ENCODE measurements at regions of chr6 and their contacts with region 1.

Region 1: GRCh38 chr6:135506270-135506997 is 8.9 kb upstream of the AHI1 start:
- DNase-seq: no peak
- ATAC-seq: peak; percentile 62
- H3K4me3 Mint-ChIP-seq: no peak overlapping the region
- H3K27ac Mint-ChIP-seq: no peak overlapping the region
- H3K4me1 Mint-ChIP-seq: peaks cover 2% of the 10 kb centered on the region
- H3K27me3 Mint-ChIP-seq: no peaks in the 10 kb centered on the region
- CTCF ChIP-seq: peak; percentile 35

Region 2: DNA sequence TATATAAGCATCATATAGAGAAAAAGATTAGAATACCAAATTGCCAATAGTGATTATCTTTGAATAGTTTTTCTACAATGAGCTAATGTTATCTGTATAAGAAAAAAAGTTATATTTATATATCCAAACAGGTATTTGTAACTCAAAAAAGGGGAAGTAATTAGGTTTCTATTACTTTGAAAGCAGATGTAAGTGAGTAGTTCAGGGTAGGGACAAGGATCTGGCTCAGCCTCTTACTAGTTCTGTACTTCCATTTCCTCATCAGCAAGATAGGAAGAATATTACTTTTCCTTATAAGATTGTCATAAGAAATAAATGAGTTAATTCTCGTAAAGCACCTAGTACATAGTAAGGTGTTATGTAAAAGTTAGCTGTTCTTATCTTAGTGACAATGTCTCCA is 41.1 kb before region 1 on chr6:
- CTCF ChIA-PET with region 1: no interaction called
- POLR2A ChIA-PET with region 1: no interaction called
- intact Hi-C with region 1: no loop called
- DNase-seq: no peak
- ATAC-seq: peak; percentile 66
- H3K4me3 Mint-ChIP-seq: no peak overlapping the region
- H3K27ac Mint-ChIP-seq: no peak overlapping the region
- H3K4me1 Mint-ChIP-seq: peaks cover 13% of the 10 kb centered on the region
- H3K27me3 Mint-ChIP-seq: no peaks in the 10 kb centered on the region
- CTCF ChIP-seq: no peak

Region 3: GRCh38 chr6:135566311-135567068 is 60.1 kb after region 1 on chr6:
- CTCF ChIA-PET with region 1: no interaction called
- POLR2A ChIA-PET with region 1: no interaction called
- intact Hi-C with region 1: no loop called
- DNase-seq: no peak
- ATAC-seq: no peak
- H3K4me3 Mint-ChIP-seq: no peak overlapping the region
- H3K27ac Mint-ChIP-seq: no peak overlapping the region
- H3K4me1 Mint-ChIP-seq: no peaks in the 10 kb centered on the region
- H3K27me3 Mint-ChIP-seq: no peaks in the 10 kb centered on the region
- CTCF ChIP-seq: no peak

Region 4: GRCh38 chr6:135675862-135676261 is 169.4 kb after region 1 on chr6:
- CTCF ChIA-PET with region 1: no interaction called
- POLR2A ChIA-PET with region 1: no interaction called
- intact Hi-C with region 1: loop called (anchors 1 kb)
- DNase-seq: no peak
- ATAC-seq: peak; percentile 70
- H3K4me3 Mint-ChIP-seq: no peak overlapping the region
- H3K27ac Mint-ChIP-seq: no peak overlapping the region
- H3K4me1 Mint-ChIP-seq: no peaks in the 10 kb centered on the region
- H3K27me3 Mint-ChIP-seq: no peaks in the 10 kb centered on the region
- CTCF ChIP-seq: peak; percentile 43

Region 5: DNA sequence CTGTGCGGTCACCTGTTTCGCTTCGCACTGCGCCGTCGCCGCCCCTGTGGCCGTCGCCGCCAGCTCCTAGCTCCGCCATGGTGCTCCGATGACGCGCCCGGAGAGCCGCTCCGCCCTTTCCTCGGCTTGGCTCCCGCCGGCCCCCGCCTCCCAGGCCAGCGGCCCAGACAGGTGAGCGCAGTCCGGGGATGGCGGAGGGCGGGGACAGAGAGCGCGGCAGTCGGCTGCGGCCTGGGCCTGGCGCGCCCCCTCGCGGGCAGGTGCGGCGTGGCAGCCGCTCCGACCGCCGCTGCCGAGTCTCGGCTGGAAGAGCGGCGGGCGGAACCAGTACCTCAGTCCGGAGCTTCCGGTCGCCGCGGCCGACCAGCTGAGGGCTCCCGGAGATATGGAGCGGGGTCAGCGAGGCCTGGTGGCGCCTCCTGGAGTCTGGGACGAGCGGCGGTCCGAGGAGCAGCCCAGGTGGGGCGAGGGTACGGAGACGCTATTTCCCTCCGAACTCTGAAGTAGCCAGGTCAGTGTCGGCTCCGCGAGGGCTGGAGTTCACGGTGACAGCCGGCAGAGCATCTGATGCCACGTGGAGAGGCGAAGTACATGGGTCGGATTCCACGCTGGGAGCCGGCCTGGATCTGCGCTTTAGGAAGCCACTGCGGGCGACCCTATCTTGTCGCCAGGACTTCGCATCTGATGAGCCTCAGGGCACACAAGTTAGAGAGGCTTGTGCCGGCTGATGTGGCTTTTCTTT is 1044.1 kb after region 1 on chr6 and contains the start of gene MAP7:
- CTCF ChIA-PET with region 1: no interaction called
- POLR2A ChIA-PET with region 1: no interaction called
- intact Hi-C with region 1: loop called (anchors 5 kb)
- DNase-seq: peak; percentile 63
- ATAC-seq: peak; percentile 81
- H3K4me3 Mint-ChIP-seq: peak within 1 kb of the TSS; percentile 71
- H3K27ac Mint-ChIP-seq: no peak within 1 kb of the TSS
- H3K4me1 Mint-ChIP-seq: peaks cover 9% of the 10 kb centered on the region
- H3K27me3 Mint-ChIP-seq: peaks cover 32% of the 10 kb centered on the region
- CTCF ChIP-seq: peak; percentile 78
- total RNA-seq, gene MAP7: 0.35 and 0.56 TPM in 2 replicates

Region 6: GRCh38 chr6:137181891-137182653 is 1675.6 kb after region 1 on chr6:
- CTCF ChIA-PET with region 1: no interaction called
- POLR2A ChIA-PET with region 1: no interaction called
- intact Hi-C with region 1: no loop called
- DNase-seq: no peak
- ATAC-seq: no peak
- H3K4me3 Mint-ChIP-seq: no peak overlapping the region
- H3K27ac Mint-ChIP-seq: no peak overlapping the region
- H3K4me1 Mint-ChIP-seq: peaks cover 16% of the 10 kb centered on the region
- H3K27me3 Mint-ChIP-seq: no peaks in the 10 kb centered on the region
- CTCF ChIP-seq: no peak

Measured in activated B cell treated with CpG ODN at 0.5 μM for 24 hours (primary cell).